Left ventricle myocardium inferior (tissue), 1 donor: ENCODE measurements at regions of chr1 and their contacts with region 1.

Region 1: GRCh38 chr1:154760469-154760933 is 109.6 kb downstream of the KCNN3 start:
- DNase-seq: peak; percentile 60
- H3K4me3 ChIP-seq: peak overlapping the region; percentile 67
- H3K27ac ChIP-seq: no peak overlapping the region
- H3K4me1 ChIP-seq: peaks cover 32% of the 10 kb centered on the region
- H3K27me3 ChIP-seq: peaks cover 9% of the 10 kb centered on the region
- CTCF ChIP-seq: peak; percentile 87

Region 2: DNA sequence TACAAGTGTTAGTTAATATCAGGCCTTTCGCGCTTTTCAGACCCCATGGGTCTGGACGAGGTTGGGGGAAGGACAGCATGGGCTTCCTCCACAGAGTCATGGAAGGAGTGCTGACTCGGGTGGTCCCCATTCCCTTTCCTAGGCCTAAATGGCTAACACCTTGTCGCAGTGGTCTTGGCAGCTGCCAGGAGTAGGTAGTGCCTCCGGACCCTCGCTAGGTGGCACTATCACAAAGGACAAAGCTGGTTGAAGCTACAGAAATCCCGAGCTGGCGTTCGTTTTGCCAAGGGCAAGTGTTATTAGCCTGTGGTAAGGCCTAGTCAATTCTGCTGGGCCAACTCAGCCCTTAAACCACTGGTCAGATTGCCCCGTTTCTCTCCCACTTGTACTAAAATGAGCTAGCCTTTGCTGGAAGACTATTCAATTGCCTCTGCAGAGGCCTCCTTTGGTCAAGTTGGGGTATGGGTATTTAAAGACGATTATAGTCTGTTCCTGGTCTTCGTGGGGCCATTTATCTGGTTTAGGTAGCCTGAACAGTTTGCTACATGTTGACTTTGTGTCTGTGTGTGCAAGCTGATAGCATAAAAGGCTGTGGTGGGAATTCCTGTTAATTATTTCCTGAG is 200.9 kb before region 1 on chr1:
- intact Hi-C with region 1: loop called (anchors 10 kb)
- DNase-seq: peak; percentile 77
- H3K4me3 ChIP-seq: peak overlapping the region; percentile 98
- H3K27ac ChIP-seq: peak overlapping the region; percentile 96
- H3K4me1 ChIP-seq: peaks cover 40% of the 10 kb centered on the region
- H3K27me3 ChIP-seq: no peaks in the 10 kb centered on the region
- CTCF ChIP-seq: peak; percentile 95

Region 3: DNA sequence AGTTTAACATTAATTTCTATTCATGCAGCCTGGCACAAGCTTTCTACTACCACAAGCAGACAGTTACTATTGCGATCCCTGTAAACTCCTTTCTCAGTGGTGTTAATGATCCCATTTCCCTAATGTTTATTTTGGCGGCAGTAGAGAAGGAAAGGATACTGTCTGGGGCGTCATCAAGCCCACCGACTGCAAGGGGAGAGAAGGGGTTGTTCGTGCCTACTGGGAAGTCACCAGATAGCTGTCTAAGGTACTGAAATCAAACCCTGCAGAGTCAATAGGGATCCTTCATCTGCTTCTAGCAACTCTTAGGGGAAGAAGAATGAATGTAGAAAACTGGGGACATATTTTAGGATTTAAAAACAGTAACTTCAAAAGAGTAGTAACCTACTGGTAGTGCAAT is 57.3 kb before region 1 on chr1:
- intact Hi-C with region 1: no loop called
- DNase-seq: no peak
- H3K4me3 ChIP-seq: no peak overlapping the region
- H3K27ac ChIP-seq: no peak overlapping the region
- H3K4me1 ChIP-seq: peaks cover 32% of the 10 kb centered on the region
- H3K27me3 ChIP-seq: no peaks in the 10 kb centered on the region
- CTCF ChIP-seq: no peak

Region 4: DNA sequence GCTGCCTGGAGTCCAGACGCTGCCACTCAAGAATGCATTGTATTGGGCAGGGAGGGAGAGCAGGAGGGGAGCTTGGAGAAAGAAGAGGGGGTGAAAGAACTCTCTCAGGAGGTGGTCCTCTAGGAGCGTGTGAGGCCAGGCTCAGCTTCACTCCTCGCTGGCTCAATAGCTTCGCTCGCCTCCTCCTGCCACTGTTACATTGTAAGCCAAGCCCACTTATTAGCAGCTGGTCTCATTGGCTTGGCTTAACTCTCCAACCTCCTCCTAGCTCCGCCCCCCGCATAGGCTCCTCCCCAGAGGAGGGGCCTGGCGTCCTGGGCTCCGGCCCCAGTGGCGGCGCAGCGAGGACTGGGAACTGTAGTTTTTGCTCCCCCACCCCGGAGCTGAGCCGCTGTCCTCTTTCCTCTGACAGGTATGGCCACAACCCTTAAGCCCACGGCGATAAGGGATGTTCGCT is 109.6 kb after region 1 on chr1 and contains the start of gene KCNN3:
- intact Hi-C with region 1: loop called (anchors 10 kb)
- DNase-seq: peak; percentile 94
- H3K4me3 ChIP-seq: peak within 1 kb of the TSS; percentile 71
- H3K27ac ChIP-seq: peak within 1 kb of the TSS; percentile 59
- H3K4me1 ChIP-seq: peaks cover 50% of the 10 kb centered on the region
- H3K27me3 ChIP-seq: no peaks in the 10 kb centered on the region
- CTCF ChIP-seq: no peak
- total RNA-seq, gene KCNN3: 4.8 TPM